Endothelial cell of umbilical vein (primary cell): ENCODE measurements at regions of chr2 and their contacts with region 1.

Region 1: DNA sequence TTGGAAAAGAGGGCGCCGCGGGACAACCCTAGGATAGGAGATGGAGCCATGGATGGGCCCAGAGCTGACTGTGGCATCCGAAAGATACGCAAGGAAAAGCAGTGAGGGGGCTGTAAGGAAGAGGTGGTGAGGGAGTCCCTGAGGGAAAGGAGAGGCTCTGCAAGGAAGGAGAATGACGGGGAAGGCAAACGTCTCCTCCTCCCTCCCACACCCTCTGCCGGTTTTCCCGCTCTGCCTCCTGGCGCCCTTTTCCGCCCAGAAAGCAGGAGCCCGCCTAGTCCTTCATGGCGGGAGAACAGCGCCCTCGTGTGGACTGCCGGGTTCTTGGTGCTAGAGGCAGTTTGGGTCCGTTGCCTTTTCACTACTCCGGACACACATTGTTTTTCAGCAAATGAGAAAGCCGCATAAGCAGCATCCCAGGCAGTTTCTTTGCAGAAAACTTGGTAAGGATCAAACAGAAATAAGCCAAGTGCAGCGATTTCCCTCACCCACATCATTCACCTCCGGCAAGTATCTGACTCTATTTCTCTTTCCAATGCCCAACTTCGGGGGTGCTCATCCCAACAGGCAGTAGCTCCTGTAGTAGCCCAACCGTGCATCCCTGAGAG is 200.4 kb downstream of the INO80D start:
- DNase-seq: peak; percentile 76
- H3K4me3 ChIP-seq: no peak overlapping the region
- H3K27ac ChIP-seq: no peak overlapping the region
- H3K4me1 ChIP-seq: peaks cover 5% of the 10 kb centered on the region
- H3K27me3 ChIP-seq: peaks cover 0 to 2% of the 10 kb centered on the region in 2 experiments
- CTCF ChIP-seq: peak; percentile 90 to 93
- POLR2A ChIP-seq: no peak

Region 2: DNA sequence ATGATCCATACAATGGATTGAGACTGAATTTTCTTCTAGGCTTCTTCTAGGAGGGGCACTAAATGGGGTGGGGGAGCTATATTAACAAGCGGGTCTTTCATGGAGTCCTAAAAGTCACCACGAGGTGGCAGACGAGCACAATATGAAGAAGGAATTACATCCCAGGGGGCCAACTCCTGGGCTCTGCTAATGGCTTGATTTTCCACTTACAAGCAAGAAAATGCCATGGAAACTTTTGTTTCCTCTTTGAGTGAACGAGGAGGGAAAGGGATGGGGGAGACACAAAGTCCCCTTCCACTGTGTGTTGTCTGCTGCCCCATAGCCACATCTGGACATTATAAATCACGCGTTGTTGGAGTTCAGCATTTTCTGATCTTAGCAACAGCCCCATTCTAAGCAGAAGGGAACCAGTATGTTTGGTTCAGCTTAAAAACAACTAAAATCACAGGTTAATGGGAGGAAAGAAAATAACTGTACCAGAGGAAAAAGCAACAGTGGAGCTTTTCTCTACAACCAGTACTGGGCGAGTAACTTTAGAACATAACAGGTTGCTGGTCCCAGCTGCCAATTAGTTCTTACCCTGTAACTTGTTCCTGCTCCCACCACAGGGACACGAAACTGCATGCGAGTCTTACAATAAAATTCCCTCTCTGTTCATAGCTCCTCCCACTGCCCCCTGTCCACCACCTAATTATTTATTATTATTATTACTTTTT is 1625.3 kb before region 1 on chr2:
- CTCF ChIA-PET with region 1: interaction called, 4 read pairs
- POLR2A ChIA-PET with region 1: no interaction called
- dilution Hi-C with region 1: no loop called
- intact Hi-C with region 1: loop called (anchors 1 kb)
- DNase-seq: peak; percentile 86
- H3K4me3 ChIP-seq: no peak overlapping the region
- H3K27ac ChIP-seq: no peak overlapping the region
- H3K4me1 ChIP-seq: peaks cover 6% of the 10 kb centered on the region
- H3K27me3 ChIP-seq: peaks cover 0 to 2% of the 10 kb centered on the region in 2 experiments
- CTCF ChIP-seq: peak; percentile 63 to 72
- POLR2A ChIP-seq: no peak

Region 3: DNA sequence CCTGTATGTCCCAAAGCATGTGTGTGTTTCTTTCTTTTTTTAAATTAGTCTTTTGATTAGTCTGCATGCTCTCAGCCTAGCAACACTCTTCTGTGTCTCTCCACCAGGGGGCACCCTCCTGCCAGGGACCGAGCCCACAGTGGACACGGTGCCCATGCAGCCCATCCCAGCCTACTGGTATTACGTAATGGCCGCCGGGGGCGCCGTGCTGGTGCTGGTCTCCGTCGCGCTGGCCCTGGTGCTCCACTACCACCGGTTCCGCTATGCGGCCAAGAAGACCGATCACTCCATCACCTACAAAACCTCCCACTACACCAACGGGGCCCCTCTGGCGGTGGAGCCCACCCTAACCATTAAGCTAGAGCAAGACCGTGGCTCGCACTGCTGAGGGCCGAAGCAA is 109.5 kb before region 1 on chr2:
- CTCF ChIA-PET with region 1: interaction called, 20 read pairs
- POLR2A ChIA-PET with region 1: no interaction called
- dilution Hi-C with region 1: no loop called
- intact Hi-C with region 1: loop called (anchors 1 kb)
- DNase-seq: no peak
- H3K4me3 ChIP-seq: no peak overlapping the region
- H3K27ac ChIP-seq: no peak overlapping the region
- H3K4me1 ChIP-seq: peaks cover 9% of the 10 kb centered on the region
- H3K27me3 ChIP-seq: no peaks in the 10 kb centered on the region
- CTCF ChIP-seq: peak; percentile 63 to 71
- POLR2A ChIP-seq: no peak

Region 4: GRCh38 chr2:206045251-206045650 is 159.7 kb after region 1 on chr2:
- CTCF ChIA-PET with region 1: no interaction called
- POLR2A ChIA-PET with region 1: no interaction called
- dilution Hi-C with region 1: no loop called
- intact Hi-C with region 1: no loop called
- DNase-seq: no peak
- H3K4me3 ChIP-seq: no peak overlapping the region
- H3K27ac ChIP-seq: no peak overlapping the region
- H3K4me1 ChIP-seq: no peaks in the 10 kb centered on the region
- H3K27me3 ChIP-seq: no peaks in the 10 kb centered on the region
- CTCF ChIP-seq: no peak
- POLR2A ChIP-seq: no peak